CD14-positive monocyte (primary cell): ENCODE measurements at regions of chr1 and their contacts with region 1.

Region 1: DNA sequence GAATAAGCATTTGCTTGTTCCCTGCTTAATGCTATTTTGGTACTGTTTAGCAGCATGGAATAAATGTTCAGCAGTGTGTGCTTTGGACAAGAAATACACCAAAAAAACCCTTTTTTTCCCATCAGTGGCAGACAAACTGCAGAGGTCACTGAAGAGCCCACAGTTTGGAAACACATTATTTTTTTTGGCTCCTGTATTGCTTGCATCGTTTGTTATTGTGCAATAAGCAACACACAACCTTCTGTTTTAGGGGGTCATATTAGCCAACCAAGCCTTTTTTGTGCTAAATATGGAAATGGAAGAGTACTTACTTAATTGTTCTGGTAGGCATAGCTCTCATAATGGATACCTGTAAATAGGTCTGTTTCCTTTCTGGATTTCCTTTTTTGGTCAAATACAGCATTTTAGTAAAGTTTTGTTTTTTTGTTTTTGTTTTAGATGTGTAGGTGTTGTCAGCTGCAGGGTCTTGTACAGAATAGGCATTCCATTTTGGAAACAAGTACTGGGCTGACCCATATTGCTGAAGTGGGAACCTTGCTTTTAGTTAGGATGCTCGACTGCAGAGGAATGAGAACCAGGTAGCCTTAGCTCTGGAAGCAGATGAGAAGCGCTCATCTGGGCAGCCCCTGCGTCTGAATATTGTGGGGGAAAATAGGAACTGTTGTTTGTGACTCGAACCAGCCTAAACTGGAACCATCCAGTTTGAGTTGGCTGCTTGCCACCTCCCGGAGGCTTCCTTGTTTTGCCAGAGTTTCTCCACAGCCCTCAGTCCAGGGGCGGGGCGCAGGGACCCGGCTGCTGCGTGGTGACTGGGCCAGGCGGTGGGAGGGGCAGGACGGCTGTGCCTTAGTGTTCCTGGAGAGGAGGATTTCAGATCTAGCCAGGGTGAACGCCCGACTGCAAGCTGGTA is 38.4 kb downstream of the SPEN start:
- DNase-seq: peak; percentile 91 to 97 (median 96)
- H3K4me3 ChIP-seq: peak overlapping the region; percentile 57 to 86 (median 83)
- H3K4me3 Mint-ChIP-seq: peak overlapping the region; percentile 82 to 90
- H3K27ac ChIP-seq: peak overlapping the region; percentile 80 to 97
- H3K27ac Mint-ChIP-seq: peak overlapping the region; percentile 95 to 98 (median 97)
- H3K4me1 ChIP-seq: peaks cover 42 to 55% of the 10 kb centered on the region in 2 donors
- H3K4me1 Mint-ChIP-seq: peaks cover 59% of the 10 kb centered on the region
- H3K27me3 ChIP-seq: no peaks in the 10 kb centered on the region
- H3K27me3 Mint-ChIP-seq: peaks cover 0 to 1% (median 0%) of the 10 kb centered on the region in 3 donors
- CTCF ChIP-seq: peak; percentile 12

Region 2: DNA sequence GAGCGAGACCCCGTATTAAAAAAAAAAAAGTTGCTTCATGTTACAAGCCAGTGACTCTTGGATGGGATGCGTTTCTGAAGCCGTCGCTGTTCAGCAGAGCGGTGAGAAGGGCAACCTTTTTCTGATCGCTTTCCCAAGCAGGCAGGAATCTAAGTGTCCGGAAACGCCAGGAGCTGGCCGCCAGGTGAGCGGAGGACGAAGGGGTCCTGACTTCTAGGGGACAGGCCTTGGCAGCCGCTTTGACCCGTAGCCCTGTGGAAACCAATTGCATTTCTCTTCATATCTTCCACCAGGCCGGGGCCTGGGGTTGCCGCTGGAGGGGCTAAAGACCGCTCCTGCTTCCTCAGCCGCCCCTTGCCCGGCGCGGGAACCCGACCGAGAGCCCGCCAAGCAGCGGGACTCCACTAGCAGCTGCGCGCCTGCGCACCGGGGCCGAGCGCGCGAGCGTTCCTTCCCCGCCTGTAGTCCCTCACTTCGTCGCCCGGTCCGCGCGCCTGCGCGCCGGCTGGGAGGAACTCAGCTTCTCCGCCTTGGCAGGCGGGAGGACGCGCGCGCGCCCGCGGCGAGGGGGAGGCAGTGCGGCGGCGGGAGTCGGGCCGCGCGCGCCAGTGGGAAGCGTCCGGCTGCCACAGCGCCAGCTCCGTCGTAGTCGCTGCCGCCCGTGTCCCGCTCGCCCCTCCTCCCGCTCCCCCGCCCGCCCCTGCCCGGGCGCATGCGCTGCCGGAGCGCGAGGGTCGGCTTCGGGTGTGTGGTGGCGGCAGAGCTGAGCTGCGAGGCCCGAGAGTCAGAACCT is 38.7 kb before region 1 on chr1 and contains the start of gene SPEN:
- intact Hi-C with region 1: loop called in 1 of 2 experiments (anchors 5 kb)
- DNase-seq: peak; percentile 97 to 98 (median 97)
- H3K4me3 ChIP-seq: peak within 1 kb of the TSS; percentile 67 to 99 (median 97)
- H3K4me3 Mint-ChIP-seq: peak within 1 kb of the TSS; percentile 99 to 100
- H3K27ac ChIP-seq: peak within 1 kb of the TSS; percentile 95 to 98
- H3K27ac Mint-ChIP-seq: peak within 1 kb of the TSS; percentile 96 to 99 (median 98)
- H3K4me1 ChIP-seq: peaks cover 35 to 43% of the 10 kb centered on the region in 2 donors
- H3K4me1 Mint-ChIP-seq: peaks cover 43% of the 10 kb centered on the region
- H3K27me3 ChIP-seq: no peaks in the 10 kb centered on the region
- H3K27me3 Mint-ChIP-seq: no peaks in the 10 kb centered on the region
- CTCF ChIP-seq: no peak
- polyA plus RNA-seq, gene SPEN: 3.1 to 30.9 (median 6.1) TPM

Region 3: GRCh38 chr1:15937706-15938168 is 51.8 kb after region 1 on chr1:
- intact Hi-C with region 1: no loop called
- DNase-seq: peak; percentile 36 to 63 (median 45)
- H3K4me3 ChIP-seq: no peak overlapping the region
- H3K4me3 Mint-ChIP-seq: no peak overlapping the region
- H3K27ac ChIP-seq: peak overlapping the region; percentile 9 to 68
- H3K27ac Mint-ChIP-seq: peak overlapping the region; percentile 69 to 94 (median 87)
- H3K4me1 ChIP-seq: no peaks in the 10 kb centered on the region
- H3K4me1 Mint-ChIP-seq: peaks cover 4% of the 10 kb centered on the region
- H3K27me3 ChIP-seq: no peaks in the 10 kb centered on the region
- H3K27me3 Mint-ChIP-seq: peaks cover 0 to 4% (median 1%) of the 10 kb centered on the region in 3 donors
- CTCF ChIP-seq: peak; percentile 22

Region 4: GRCh38 chr1:16048573-16049189 is 162.7 kb after region 1 on chr1:
- intact Hi-C with region 1: no loop called
- DNase-seq: no peak
- H3K4me3 ChIP-seq: peak overlapping the region in 2 of 3 experiments; percentile 18 to 62
- H3K4me3 Mint-ChIP-seq: peak overlapping the region; percentile 16 to 42
- H3K27ac ChIP-seq: no peak overlapping the region
- H3K27ac Mint-ChIP-seq: no peak overlapping the region
- H3K4me1 ChIP-seq: peaks cover 4 to 8% of the 10 kb centered on the region in 2 donors
- H3K4me1 Mint-ChIP-seq: peaks cover 4% of the 10 kb centered on the region
- H3K27me3 ChIP-seq: peaks cover 0 to 2% of the 10 kb centered on the region in 2 donors
- H3K27me3 Mint-ChIP-seq: peaks cover 3 to 30% (median 5%) of the 10 kb centered on the region in 3 donors
- CTCF ChIP-seq: no peak